ENCODE measurements at regions of chr13 and their contacts with region 1.

Region 1: GRCh38 chr13:37049810-37050209 is 9.7 kb downstream of the SUPT20H start:
- DNase-seq: no peak
- H3K4me3 ChIP-seq: no peak overlapping the region
- H3K27ac ChIP-seq: no peak overlapping the region
- H3K4me1 ChIP-seq: peaks cover 24% of the 10 kb centered on the region
- H3K27me3 ChIP-seq: no peaks in the 10 kb centered on the region
- CTCF ChIP-seq: peak; percentile 48

Region 2: GRCh38 chr13:36297366-36298338 is 752.2 kb before region 1 on chr13 and contains the start of gene CCDC169:
- CTCF ChIA-PET with region 1: no interaction called
- POLR2A ChIA-PET with region 1: no interaction called
- intact Hi-C with region 1: loop called (anchors 10 kb)
- DNase-seq: peak; percentile 89
- H3K4me3 ChIP-seq: peak within 1 kb of the TSS; percentile 59
- H3K27ac ChIP-seq: peak within 1 kb of the TSS; percentile 86
- H3K4me1 ChIP-seq: peaks cover 16% of the 10 kb centered on the region
- H3K27me3 ChIP-seq: no peaks in the 10 kb centered on the region
- CTCF ChIP-seq: no peak
- total RNA-seq, gene CCDC169: 14.3 and 14.5 TPM in 2 replicates